Adrenal gland (tissue), 19 donors: ENCODE measurements at regions of chr11 and their contacts with region 1.

Region 1: DNA sequence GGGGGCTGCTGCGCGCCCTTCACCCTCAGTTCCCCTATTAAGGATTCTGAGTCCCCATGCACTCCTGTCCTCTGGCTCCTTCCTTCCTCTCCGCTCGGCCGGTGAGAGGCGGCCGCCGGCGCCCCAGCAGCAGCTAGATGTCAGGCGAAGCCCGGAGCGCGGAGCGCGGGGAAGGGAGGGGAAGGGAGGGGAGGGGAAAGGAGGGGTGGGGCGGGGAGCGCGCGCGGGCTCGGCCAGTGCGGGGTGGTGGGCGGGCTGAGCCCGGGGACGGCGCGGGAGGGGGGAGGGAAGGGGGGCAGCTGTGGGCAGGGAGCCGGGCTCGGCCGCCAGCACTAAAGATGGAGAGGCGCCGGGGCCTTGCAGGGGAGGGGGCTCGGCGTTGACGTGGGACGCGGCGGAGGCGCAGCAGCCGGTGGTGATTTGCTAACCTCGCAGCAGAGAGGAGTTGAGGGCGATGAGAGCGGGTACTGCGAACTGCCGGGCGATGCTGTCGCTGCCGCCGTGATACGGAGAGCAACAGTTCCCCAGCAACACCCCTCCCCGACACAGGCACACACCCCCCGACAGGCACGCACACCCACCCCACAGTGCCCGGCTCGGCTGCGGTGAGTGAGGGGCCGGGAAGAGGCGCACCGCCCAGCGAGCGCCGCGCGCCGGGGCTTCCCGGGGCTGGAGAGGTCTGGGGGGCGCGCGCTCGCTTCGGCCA is at the start of gene ZBTB16:
- DNase-seq: peak; percentile 86 to 96 (median 92)
- H3K4me3 ChIP-seq: peak within 1 kb of the TSS; percentile 76 to 100 (median 82)
- H3K27ac ChIP-seq: peak within 1 kb of the TSS; percentile 78 to 99 (median 93)
- H3K4me1 ChIP-seq: peaks cover 36 to 59% of the 10 kb centered on the region in 2 donors
- H3K27me3 ChIP-seq: no peaks in the 10 kb centered on the region
- CTCF ChIP-seq: peak in 3 of 6 experiments; percentile 19 to 35 (median 27)
- POLR2A ChIP-seq: peak; percentile 82 to 93
- total RNA-seq, gene ZBTB16: 7.9 to 119 (median 68.3) TPM

Region 2: GRCh38 chr11:114166897-114167323 is 107.5 kb after region 1 on chr11:
- intact Hi-C with region 1: loop called in 1 of 2 experiments (anchors 5 kb)
- DNase-seq: peak in 5 of 7 donors; percentile 47 to 73 (median 67)
- H3K4me3 ChIP-seq: no peak overlapping the region
- H3K27ac ChIP-seq: peak overlapping the region; percentile 74 to 99 (median 96)
- H3K4me1 ChIP-seq: peaks cover 95 to 97% of the 10 kb centered on the region in 2 donors
- H3K27me3 ChIP-seq: no peaks in the 10 kb centered on the region
- CTCF ChIP-seq: no peak
- POLR2A ChIP-seq: peak in 1 of 2 donors; percentile 63

Region 3: GRCh38 chr11:114180301-114181055 is 121.0 kb after region 1 on chr11:
- intact Hi-C with region 1: loop called in 1 of 2 experiments (anchors 5 kb)
- DNase-seq: peak in 3 of 7 donors; percentile 61 to 85 (median 65)
- H3K4me3 ChIP-seq: peak overlapping the region in 1 of 4 donors; percentile 46
- H3K27ac ChIP-seq: peak overlapping the region; percentile 87 to 98 (median 96)
- H3K4me1 ChIP-seq: peaks cover 60 to 81% of the 10 kb centered on the region in 2 donors
- H3K27me3 ChIP-seq: no peaks in the 10 kb centered on the region
- CTCF ChIP-seq: peak in 5 of 6 experiments; percentile 46 to 60 (median 56)
- POLR2A ChIP-seq: no peak

Region 4: GRCh38 chr11:114257621-114258558 is 198.5 kb after region 1 on chr11:
- intact Hi-C with region 1: loop called in 1 of 2 experiments (anchors 5 kb)
- DNase-seq: peak in 6 of 7 donors; percentile 65 to 80 (median 66)
- H3K4me3 ChIP-seq: no peak overlapping the region
- H3K27ac ChIP-seq: peak overlapping the region in 4 of 5 donors; percentile 29 to 86 (median 64)
- H3K4me1 ChIP-seq: peaks cover 30 to 41% of the 10 kb centered on the region in 2 donors
- H3K27me3 ChIP-seq: no peaks in the 10 kb centered on the region
- CTCF ChIP-seq: peak in 5 of 6 experiments; percentile 25 to 48 (median 31)
- POLR2A ChIP-seq: no peak